ENCODE measurements at regions of chr2 and their contacts with region 1.

Region 1: GRCh38 chr2:234269769-234270204 is 219.3 kb downstream of the SPP2 start:
- DNase-seq: no peak
- ATAC-seq: no peak
- H3K4me3 Mint-ChIP-seq: no peak overlapping the region
- H3K27ac Mint-ChIP-seq: no peak overlapping the region
- H3K4me1 Mint-ChIP-seq: peaks cover 56% of the 10 kb centered on the region
- H3K27me3 Mint-ChIP-seq: no peaks in the 10 kb centered on the region
- CTCF ChIP-seq: no peak

Region 2: DNA sequence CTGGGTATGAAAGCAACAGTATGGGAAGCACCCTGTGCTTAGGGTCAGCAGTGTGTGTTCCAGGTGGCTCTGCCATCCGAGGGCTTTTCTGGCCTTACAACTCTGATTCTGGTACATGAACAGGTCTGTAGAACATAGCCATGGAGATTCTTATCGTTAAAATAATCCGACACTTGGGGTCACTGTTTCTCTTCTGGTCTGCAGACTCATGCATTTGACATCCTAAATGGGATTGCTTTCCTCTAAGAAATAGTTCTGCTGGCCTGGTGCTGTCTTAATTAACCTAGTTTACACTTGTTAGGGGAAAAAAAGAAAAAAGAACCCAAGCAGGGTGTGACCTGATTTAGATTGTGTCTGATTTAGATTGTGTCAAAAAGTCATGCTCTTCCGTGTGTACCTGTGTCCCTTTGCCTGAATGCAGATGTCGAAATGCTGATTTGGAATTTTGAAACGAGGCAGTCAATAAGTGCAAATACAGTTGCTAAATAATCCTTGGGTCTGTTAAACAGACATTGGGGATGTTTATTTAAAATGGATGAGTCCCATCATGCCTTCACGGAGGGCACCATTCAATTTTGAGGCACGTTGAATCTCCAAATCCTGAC is 293.0 kb before region 1 on chr2:
- CTCF ChIA-PET with region 1: no interaction called
- POLR2A ChIA-PET with region 1: no interaction called
- intact Hi-C with region 1: loop called (anchors 10 kb)
- DNase-seq: no peak
- ATAC-seq: peak; percentile 52
- H3K4me3 Mint-ChIP-seq: no peak overlapping the region
- H3K27ac Mint-ChIP-seq: no peak overlapping the region
- H3K4me1 Mint-ChIP-seq: peaks cover 30% of the 10 kb centered on the region
- H3K27me3 Mint-ChIP-seq: no peaks in the 10 kb centered on the region
- CTCF ChIP-seq: peak; percentile 65

Measured in activated CD8-positive, alpha-beta T cell treated with anti-CD3 and anti-CD28 coated beads for 36 hours (primary cell).